T-cell (primary cell): ENCODE measurements at regions of chr5 and their contacts with region 1.

Region 1: DNA sequence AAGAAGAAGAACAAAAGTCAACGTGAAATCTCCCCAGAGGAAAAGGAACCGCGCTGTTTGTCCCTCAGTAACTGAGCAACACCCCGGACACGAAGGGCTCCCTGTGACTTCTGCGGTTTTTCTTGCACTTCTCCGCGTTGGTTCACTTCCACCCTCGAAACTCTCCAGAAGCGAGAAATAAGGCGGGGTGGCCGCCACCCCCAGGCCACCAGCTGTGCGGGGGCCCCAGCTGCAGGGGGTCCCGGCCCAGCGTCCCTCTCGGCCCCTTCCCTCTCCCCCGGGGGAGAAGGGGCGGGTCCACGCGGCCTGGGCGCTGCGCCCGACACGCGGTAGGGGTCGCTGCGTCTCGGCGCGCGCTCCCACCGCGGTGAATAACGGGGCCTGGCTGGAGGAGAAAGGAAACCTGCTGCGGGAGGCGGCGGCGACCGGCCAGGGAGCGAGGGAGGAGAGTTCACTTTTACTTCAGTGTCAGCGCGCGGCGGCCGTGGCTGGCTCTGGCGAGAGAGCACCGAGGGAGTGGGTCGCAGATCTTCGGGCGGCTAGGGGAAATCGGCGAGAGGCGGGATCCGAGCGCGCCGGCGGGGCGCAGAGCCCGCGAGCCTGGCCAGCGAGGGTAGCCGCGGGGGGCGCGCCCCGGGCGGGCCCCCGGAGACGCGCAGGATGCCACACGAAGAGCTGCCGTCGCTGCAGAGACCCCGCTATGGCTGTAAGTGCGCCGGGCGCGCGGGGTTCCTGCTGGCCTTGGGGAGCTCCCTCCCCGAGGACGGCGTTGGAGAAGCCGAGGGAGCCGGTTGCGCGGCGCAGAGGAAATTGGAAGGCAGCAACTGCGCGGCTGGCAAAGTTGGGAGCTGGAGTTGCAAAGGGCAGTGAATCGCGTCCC is at the start of gene IQGAP2:
- DNase-seq: peak; percentile 70 to 93 (median 84)
- ATAC-seq: peak; percentile 63 to 74 (median 70)
- H3K4me3 ChIP-seq: peak within 1 kb of the TSS; percentile 76 to 85
- H3K4me3 Mint-ChIP-seq: peak within 1 kb of the TSS; percentile 87 to 97 (median 93)
- H3K27ac ChIP-seq: peak within 1 kb of the TSS; percentile 89
- H3K27ac Mint-ChIP-seq: peak within 1 kb of the TSS; percentile 98 to 100
- H3K4me1 ChIP-seq: peaks cover 33 to 45% of the 10 kb centered on the region in 2 experiments
- H3K4me1 Mint-ChIP-seq: peaks cover 60 to 62% (median 60%) of the 10 kb centered on the region in 3 donors
- H3K27me3 ChIP-seq: no peaks in the 10 kb centered on the region
- H3K27me3 Mint-ChIP-seq: no peaks in the 10 kb centered on the region
- total RNA-seq, gene IQGAP2: 66.5 to 121 (median 72.5) TPM

Region 2: DNA sequence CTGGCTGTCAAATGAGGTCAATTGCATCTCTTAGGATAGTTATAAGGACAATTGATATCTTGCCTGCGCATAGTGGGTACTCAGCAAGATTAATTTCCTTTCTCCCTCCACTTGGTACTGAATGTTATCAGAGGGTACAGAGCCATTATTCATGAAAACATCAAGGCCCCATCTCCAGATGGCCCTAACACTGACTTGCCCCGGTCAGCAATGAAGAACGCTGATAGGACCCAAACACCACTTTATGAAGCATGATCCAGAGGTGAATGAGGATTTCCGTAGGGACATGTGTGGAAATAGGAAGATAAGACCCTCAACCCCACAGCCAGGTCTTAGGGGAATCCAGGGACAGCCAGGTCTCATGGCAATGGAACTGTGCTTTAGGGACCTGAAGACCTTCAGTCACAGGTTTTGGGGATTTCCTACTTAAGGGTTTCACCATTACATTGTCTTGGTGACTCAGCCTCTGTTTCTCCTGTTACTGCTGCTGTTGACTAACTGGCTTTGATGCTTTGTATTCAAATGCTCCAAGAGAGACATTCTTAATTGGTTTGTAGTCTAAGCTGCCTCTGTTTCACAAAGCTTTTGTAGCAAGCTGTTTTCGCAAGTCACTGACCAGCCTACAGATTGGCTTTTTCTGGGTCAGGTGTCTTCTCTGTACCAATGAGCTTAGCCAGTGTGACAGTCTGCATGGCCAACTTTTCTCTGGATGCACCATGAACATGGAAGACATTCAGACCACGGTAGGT is 35.3 kb before region 1 on chr5:
- CTCF ChIA-PET with region 1: interaction called in 1 of 2 experiments, 4 read pairs
- POLR2A ChIA-PET with region 1: interaction called in 1 of 2 experiments, 13 read pairs
- DNase-seq: no peak
- ATAC-seq: peak in 3 of 4 experiments; percentile 22 to 67 (median 34)
- H3K4me3 ChIP-seq: no peak overlapping the region
- H3K4me3 Mint-ChIP-seq: no peak overlapping the region
- H3K27ac ChIP-seq: no peak overlapping the region
- H3K27ac Mint-ChIP-seq: no peak overlapping the region
- H3K4me1 ChIP-seq: no peaks in the 10 kb centered on the region
- H3K4me1 Mint-ChIP-seq: peaks cover 0 to 12% (median 10%) of the 10 kb centered on the region in 3 donors
- H3K27me3 ChIP-seq: no peaks in the 10 kb centered on the region
- H3K27me3 Mint-ChIP-seq: peaks cover 0 to 4% of the 10 kb centered on the region in 2 donors

Region 3: GRCh38 chr5:76384705-76385104 is 18.4 kb before region 1 on chr5:
- CTCF ChIA-PET with region 1: interaction called in 1 of 2 experiments, 6 read pairs
- POLR2A ChIA-PET with region 1: interaction called, 5 to 11 read pairs
- DNase-seq: peak in 11 of 35 experiments; percentile 4 to 55 (median 19)
- ATAC-seq: peak; percentile 40 to 94 (median 66)
- H3K4me3 ChIP-seq: no peak overlapping the region
- H3K4me3 Mint-ChIP-seq: no peak overlapping the region
- H3K27ac ChIP-seq: no peak overlapping the region
- H3K27ac Mint-ChIP-seq: peak overlapping the region in 1 of 2 donors; percentile 73
- H3K4me1 ChIP-seq: peaks cover 14 to 35% of the 10 kb centered on the region in 2 experiments
- H3K4me1 Mint-ChIP-seq: peaks cover 38 to 58% (median 44%) of the 10 kb centered on the region in 3 donors
- H3K27me3 ChIP-seq: no peaks in the 10 kb centered on the region
- H3K27me3 Mint-ChIP-seq: no peaks in the 10 kb centered on the region

Region 4: GRCh38 chr5:76473661-76474060 is 70.5 kb after region 1 on chr5:
- CTCF ChIA-PET with region 1: interaction called in 1 of 2 experiments, 13 read pairs
- POLR2A ChIA-PET with region 1: interaction called in 1 of 2 experiments, 3 read pairs
- DNase-seq: peak; percentile 29 to 86 (median 75)
- ATAC-seq: peak; percentile 86 to 99 (median 98)
- H3K4me3 ChIP-seq: no peak overlapping the region
- H3K4me3 Mint-ChIP-seq: peak overlapping the region; percentile 11 to 66 (median 15)
- H3K27ac ChIP-seq: peak overlapping the region; percentile 70
- H3K27ac Mint-ChIP-seq: peak overlapping the region; percentile 96 to 97
- H3K4me1 ChIP-seq: peaks cover 32 to 47% of the 10 kb centered on the region in 2 experiments
- H3K4me1 Mint-ChIP-seq: peaks cover 72 to 85% (median 85%) of the 10 kb centered on the region in 3 donors
- H3K27me3 ChIP-seq: no peaks in the 10 kb centered on the region
- H3K27me3 Mint-ChIP-seq: no peaks in the 10 kb centered on the region

Region 5: DNA sequence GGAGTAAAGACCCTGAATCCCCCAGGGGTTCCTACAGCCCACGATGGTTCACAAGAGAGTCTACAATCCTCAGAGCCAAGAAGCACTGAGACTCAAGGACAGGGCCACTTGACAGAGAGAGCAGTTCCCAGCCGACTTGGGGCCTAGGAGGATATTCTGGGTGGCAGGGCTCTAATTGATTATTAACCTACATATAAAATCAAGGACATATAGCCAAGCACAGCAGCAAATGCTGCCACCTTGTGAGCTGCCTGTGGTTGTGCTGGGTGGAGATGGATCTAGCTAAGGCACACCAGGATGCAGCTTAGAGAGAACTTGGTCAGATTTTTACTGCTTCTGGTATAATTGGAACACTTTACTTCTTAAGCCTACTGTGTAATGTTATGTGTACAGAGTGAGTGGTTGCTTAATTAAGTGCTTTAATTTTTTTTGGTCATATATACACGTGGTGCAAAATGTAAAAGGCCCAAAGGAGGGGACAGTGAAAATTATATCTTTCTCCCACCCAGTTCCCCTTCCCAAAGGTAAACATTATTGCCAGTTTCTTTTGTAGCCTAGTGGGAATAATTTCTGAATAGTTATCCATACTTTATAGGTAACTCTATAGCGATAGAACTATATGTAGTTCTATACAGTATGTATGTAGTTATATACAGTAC is 141.3 kb after region 1 on chr5:
- CTCF ChIA-PET with region 1: interaction called, 4 to 27 read pairs
- POLR2A ChIA-PET with region 1: interaction called, 3 to 30 read pairs
- DNase-seq: peak; percentile 30 to 77 (median 54)
- ATAC-seq: peak; percentile 21 to 31 (median 28)
- H3K4me3 ChIP-seq: no peak overlapping the region
- H3K4me3 Mint-ChIP-seq: peak overlapping the region; percentile 67 to 76 (median 75)
- H3K27ac ChIP-seq: peak overlapping the region; percentile 96
- H3K27ac Mint-ChIP-seq: peak overlapping the region; percentile 96 to 99
- H3K4me1 ChIP-seq: peaks cover 29 to 66% of the 10 kb centered on the region in 2 experiments
- H3K4me1 Mint-ChIP-seq: peaks cover 83 to 95% (median 93%) of the 10 kb centered on the region in 3 donors
- H3K27me3 ChIP-seq: no peaks in the 10 kb centered on the region
- H3K27me3 Mint-ChIP-seq: no peaks in the 10 kb centered on the region

Region 6: DNA sequence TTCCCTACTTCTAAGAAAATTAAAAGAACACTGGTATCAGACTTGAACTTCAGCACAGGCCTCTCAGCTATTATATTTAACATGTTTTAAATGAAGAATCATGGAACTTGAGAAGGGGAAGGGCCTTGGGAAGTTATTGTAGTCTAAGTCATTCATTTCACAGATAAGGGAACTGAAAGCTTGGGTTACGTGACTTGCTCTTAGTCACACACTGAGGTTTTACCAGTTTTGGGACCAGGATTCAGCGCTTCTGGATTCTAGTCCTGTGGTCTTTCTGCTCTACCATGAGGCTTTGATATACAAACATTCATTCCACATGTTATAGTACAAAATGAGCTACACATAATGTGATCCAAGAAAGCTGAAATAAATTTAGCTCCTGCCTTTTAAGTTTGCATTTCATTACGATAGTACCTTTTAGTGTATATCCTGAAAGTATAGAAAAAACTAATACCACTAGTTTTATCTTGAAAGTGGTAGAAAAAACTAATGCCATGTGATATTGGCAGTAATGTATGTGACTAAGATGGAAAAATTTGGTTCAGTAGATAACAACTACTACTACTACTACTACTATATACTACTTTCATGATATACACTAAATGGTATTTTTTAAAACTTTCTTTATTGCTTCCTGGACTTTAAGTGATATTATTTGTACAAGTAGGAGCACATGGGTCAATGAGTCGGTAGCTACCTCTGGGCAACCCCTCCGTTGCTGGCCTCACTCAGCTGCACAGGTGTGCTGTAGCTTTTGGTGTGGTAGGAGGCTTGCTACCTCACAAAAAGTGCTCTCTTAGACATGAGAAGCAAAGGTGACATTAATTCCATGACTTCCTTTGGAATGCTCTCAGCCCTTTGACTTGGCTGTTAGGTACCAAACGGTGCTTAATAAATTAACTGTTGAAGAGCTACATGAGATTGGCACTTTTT is 179.4 kb after region 1 on chr5:
- CTCF ChIA-PET with region 1: interaction called in 1 of 2 experiments, 22 read pairs
- POLR2A ChIA-PET with region 1: interaction called in 1 of 2 experiments, 7 read pairs
- DNase-seq: no peak
- ATAC-seq: no peak
- H3K4me3 ChIP-seq: no peak overlapping the region
- H3K4me3 Mint-ChIP-seq: no peak overlapping the region
- H3K27ac ChIP-seq: no peak overlapping the region
- H3K27ac Mint-ChIP-seq: peak overlapping the region in 1 of 2 donors; percentile 53
- H3K4me1 ChIP-seq: peaks cover 0 to 2% of the 10 kb centered on the region in 2 experiments
- H3K4me1 Mint-ChIP-seq: peaks cover 0 to 31% (median 27%) of the 10 kb centered on the region in 3 donors
- H3K27me3 ChIP-seq: no peaks in the 10 kb centered on the region
- H3K27me3 Mint-ChIP-seq: no peaks in the 10 kb centered on the region